Natural killer cell (primary cell): ENCODE measurements at regions of chr16 and their contacts with region 1.

Region 1: GRCh38 chr16:87492721-87493607 is at the start of gene ZCCHC14:
- DNase-seq: peak; percentile 99
- ATAC-seq: peak; percentile 92 to 99 (median 94)
- H3K4me3 ChIP-seq: peak within 1 kb of the TSS; percentile 65
- H3K4me3 Mint-ChIP-seq: peak within 1 kb of the TSS; percentile 90
- H3K27ac ChIP-seq: no peak within 1 kb of the TSS
- H3K27ac Mint-ChIP-seq: peak within 1 kb of the TSS; percentile 82 to 87
- H3K4me1 ChIP-seq: peaks cover 62% of the 10 kb centered on the region
- H3K4me1 Mint-ChIP-seq: peaks cover 45 to 73% of the 10 kb centered on the region in 2 donors
- H3K27me3 ChIP-seq: no peaks in the 10 kb centered on the region
- H3K27me3 Mint-ChIP-seq: no peaks in the 10 kb centered on the region
- CTCF ChIP-seq: no peak
- total RNA-seq, gene ZCCHC14: 12.2 to 20.9 (median 19.2) TPM

Region 2: GRCh38 chr16:87387942-87388817 is 104.8 kb before region 1 on chr16:
- intact Hi-C with region 1: loop called (anchors 10 kb)
- DNase-seq: peak; percentile 79 to 96
- ATAC-seq: peak; percentile 64 to 83 (median 67)
- H3K4me3 ChIP-seq: peak overlapping the region; percentile 9
- H3K4me3 Mint-ChIP-seq: peak overlapping the region; percentile 61
- H3K27ac ChIP-seq: peak overlapping the region; percentile 80
- H3K27ac Mint-ChIP-seq: peak overlapping the region; percentile 95 to 97
- H3K4me1 ChIP-seq: peaks cover 33% of the 10 kb centered on the region
- H3K4me1 Mint-ChIP-seq: peaks cover 39 to 48% of the 10 kb centered on the region in 2 donors
- H3K27me3 ChIP-seq: no peaks in the 10 kb centered on the region
- H3K27me3 Mint-ChIP-seq: no peaks in the 10 kb centered on the region
- CTCF ChIP-seq: no peak

Region 3: DNA sequence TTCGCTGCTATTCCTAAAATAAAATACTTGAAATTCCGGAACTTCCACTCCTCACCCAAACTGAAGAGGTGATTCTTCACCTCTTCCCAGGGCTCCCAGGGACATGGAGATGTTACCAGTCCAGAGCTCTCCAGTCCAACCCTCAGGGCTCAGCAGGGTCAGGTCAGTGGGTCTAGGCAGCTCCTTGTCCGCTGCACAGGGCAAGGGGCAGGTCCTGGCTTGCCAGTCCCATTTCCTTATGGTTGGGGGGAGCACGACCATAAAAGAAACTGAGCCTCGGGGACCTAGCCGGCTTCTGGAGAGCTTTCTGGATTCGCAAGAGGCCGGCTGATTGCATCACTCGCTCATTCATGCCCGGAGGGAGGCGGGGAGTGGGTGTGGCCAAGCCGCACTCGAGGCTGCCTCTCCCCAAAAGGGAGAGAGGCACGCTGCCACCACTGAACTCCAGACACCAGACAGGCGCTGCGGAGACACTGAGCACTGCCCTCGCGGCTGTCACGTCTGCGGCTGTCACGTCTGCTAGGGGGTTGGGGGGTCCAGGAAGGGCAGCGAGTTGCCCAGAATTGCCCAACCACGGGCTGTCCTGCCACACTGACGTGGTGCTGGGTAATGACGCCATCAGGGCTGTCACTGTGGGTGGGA is 360.6 kb after region 1 on chr16:
- intact Hi-C with region 1: loop called (anchors 10 kb)
- DNase-seq: peak; percentile 91 to 93
- ATAC-seq: peak; percentile 78 to 89 (median 79)
- H3K4me3 ChIP-seq: peak overlapping the region; percentile 13
- H3K4me3 Mint-ChIP-seq: peak overlapping the region; percentile 70
- H3K27ac ChIP-seq: peak overlapping the region; percentile 78
- H3K27ac Mint-ChIP-seq: peak overlapping the region; percentile 86 to 94
- H3K4me1 ChIP-seq: peaks cover 60% of the 10 kb centered on the region
- H3K4me1 Mint-ChIP-seq: peaks cover 16 to 38% of the 10 kb centered on the region in 2 donors
- H3K27me3 ChIP-seq: no peaks in the 10 kb centered on the region
- H3K27me3 Mint-ChIP-seq: no peaks in the 10 kb centered on the region
- CTCF ChIP-seq: no peak